WTC11 (cell line): ENCODE measurements at regions of chr6 and their contacts with region 1.

Region 1: DNA sequence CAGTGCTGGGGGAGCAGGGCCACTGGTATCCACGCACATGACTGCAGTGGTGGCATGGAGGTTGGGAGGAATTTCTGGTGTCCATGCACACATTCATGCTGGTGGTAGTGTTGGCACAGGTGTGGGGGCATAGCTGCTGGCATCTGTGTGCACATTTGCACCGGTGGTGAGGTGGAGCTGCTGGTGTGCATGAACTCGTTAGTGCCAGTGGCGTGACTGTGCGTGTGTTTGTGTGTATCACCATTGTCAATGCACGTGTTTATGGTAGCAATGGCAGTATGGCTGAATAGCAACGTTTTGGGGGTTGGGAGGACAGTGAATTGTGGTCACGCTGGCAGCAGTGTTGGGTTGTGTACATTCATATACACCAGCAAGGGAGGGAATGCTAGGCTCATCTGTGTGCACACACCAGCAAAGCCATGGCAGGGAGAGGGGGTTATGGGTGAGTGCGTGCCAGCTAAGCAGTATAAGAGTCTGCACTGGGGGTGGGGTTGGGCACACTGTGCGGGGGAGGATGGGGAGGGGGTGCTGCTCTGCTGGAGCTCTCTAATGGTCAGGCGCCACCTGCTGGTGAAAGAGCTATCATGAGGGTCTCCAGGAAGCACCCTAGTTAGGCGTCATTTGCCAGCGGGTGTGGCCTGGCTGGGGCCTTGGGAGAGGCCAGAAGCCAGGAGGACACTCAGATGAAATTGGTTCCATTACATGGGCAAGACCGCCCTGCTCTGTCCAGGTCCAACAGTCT is 626.1 kb upstream of the ID4 start:
- DNase-seq: peak; percentile 83
- ATAC-seq: peak; percentile 99
- H3K4me3 Mint-ChIP-seq: no peak overlapping the region
- H3K27ac Mint-ChIP-seq: no peak overlapping the region
- H3K4me1 Mint-ChIP-seq: peaks cover 2% of the 10 kb centered on the region; the same call in 1 of the 2 replicates
- H3K27me3 Mint-ChIP-seq: peaks cover 3% of the 10 kb centered on the region; the same call in 1 of the 2 replicates
- CTCF ChIP-seq: peak; percentile 74

Region 2: DNA sequence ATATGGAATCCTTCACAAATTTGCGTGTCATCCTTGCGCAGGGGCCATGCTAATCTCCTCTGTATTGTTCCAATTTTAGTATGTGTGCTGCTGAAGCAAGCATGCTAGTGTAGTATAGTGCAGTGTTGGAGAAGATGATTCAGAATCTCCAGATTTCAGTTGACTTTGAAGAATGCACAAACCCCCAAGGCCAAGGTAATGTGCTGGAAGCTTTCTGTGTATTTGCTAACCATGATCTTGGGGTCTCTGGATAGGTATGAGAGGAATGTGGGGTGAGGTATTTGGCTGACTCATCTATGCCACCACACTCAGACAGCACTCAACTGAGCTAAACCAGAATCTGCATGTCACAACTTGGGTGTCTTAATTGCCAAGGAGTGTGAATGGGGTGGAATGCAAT is 904.0 kb before region 1 on chr6:
- CTCF ChIA-PET with region 1: no interaction called
- POLR2A ChIA-PET with region 1: no interaction called
- DNase-seq: no peak
- ATAC-seq: peak; percentile 71
- H3K4me3 Mint-ChIP-seq: no peak overlapping the region
- H3K27ac Mint-ChIP-seq: peak overlapping the region; percentile 54; the same call in 1 of the 2 replicates
- H3K4me1 Mint-ChIP-seq: peaks cover 21% of the 10 kb centered on the region
- H3K27me3 Mint-ChIP-seq: no peaks in the 10 kb centered on the region
- CTCF ChIP-seq: no peak

Region 3: DNA sequence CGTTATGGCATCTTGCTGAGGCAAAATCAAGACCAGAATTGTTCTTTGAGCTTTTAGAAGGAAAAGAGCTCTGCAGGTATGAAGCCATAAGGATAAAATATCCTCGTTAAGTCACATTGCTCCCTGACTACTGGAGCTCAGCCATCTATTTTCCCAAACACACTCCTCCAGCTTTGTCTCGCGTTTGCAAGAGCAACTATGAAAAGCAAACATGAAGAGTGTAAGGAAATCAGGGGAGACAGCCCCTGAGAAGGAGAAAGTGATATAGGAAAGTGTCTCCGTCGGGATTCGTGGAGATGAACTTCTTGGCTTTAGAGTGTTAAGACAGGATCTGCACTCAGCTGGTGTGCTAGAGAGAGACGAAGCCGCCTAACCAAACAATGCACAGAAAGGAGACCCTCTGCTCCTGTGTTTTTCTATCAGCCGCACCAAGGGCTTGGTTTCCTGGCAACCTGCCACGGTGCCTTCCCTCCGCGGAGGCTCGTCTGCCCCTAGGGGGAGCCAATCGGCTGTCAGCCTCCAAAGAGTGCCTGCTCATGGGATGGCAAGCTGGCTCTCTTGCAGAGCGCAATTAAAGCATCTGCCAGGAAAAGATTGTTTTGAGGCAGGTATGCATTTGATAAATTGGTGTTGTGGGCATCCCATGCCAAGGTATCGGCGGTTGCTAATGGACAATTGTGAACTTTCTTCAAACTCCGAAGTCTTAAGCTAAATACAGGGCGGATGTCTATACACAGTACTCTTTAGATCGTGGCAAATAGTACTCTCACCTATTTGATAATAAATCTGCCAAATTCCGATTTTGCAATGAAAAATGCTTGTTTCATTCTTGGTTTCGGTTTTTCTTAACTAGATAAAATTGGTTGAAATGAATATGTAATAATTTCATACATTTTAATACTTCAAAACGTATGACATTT is 220.7 kb before region 1 on chr6:
- CTCF ChIA-PET with region 1: interaction called, 10 read pairs
- POLR2A ChIA-PET with region 1: no interaction called
- DNase-seq: peak; percentile 88
- ATAC-seq: peak; percentile 98
- H3K4me3 Mint-ChIP-seq: peak overlapping the region; percentile 34; the same call in 1 of the 2 replicates
- H3K27ac Mint-ChIP-seq: no peak overlapping the region
- H3K4me1 Mint-ChIP-seq: peaks cover 24% of the 10 kb centered on the region
- H3K27me3 Mint-ChIP-seq: peaks cover 5% of the 10 kb centered on the region
- CTCF ChIP-seq: peak; percentile 52; the same call in 1 of the 2 replicates

Region 4: DNA sequence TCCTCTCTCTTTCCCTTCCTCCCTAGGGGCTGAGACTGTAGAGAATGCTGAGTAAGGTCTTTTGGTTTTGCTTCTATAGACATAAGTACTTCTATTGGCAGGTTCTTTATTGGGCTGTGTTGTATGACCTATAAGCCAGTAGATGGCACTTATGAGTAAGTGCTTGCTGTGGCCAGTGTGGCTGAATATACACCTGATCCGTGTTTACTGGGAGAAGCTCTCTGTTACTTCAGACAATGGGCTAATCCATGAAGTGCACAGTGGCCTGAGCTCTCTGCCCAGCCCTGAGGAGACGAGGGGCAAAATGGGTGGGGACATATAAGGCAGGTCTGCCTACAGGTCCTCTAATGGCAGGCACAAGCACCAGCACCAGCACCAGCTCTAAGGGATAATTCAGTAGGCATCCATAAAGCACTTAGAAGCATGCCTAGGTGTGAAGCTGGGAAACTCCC is 213.6 kb before region 1 on chr6:
- CTCF ChIA-PET with region 1: interaction called, 13 read pairs
- POLR2A ChIA-PET with region 1: no interaction called
- DNase-seq: peak; percentile 11
- ATAC-seq: peak; percentile 100
- H3K4me3 Mint-ChIP-seq: no peak overlapping the region
- H3K27ac Mint-ChIP-seq: no peak overlapping the region
- H3K4me1 Mint-ChIP-seq: peaks cover 6% of the 10 kb centered on the region
- H3K27me3 Mint-ChIP-seq: no peaks in the 10 kb centered on the region
- CTCF ChIP-seq: peak; percentile 51